Calu3 (cell line): ENCODE measurements at regions of chr18 and their contacts with region 1.

Region 1: GRCh38 chr18:37385846-37386778 is 179.5 kb downstream of the CELF4 start:
- DNase-seq: peak; percentile 18
- H3K4me3 Mint-ChIP-seq: no peak overlapping the region
- H3K27ac Mint-ChIP-seq: no peak overlapping the region
- H3K4me1 Mint-ChIP-seq: no peaks in the 10 kb centered on the region
- H3K27me3 Mint-ChIP-seq: peaks cover 86% of the 10 kb centered on the region
- CTCF ChIP-seq: peak; percentile 80

Region 2: GRCh38 chr18:36942264-36942663 is 443.8 kb before region 1 on chr18:
- CTCF ChIA-PET with region 1: no interaction called
- intact Hi-C with region 1: loop called (anchors 2 kb)
- DNase-seq: peak; percentile 40
- H3K4me3 Mint-ChIP-seq: no peak overlapping the region
- H3K27ac Mint-ChIP-seq: no peak overlapping the region
- H3K4me1 Mint-ChIP-seq: peaks cover 10% of the 10 kb centered on the region
- H3K27me3 Mint-ChIP-seq: no peaks in the 10 kb centered on the region
- CTCF ChIP-seq: peak; percentile 73

Region 3: DNA sequence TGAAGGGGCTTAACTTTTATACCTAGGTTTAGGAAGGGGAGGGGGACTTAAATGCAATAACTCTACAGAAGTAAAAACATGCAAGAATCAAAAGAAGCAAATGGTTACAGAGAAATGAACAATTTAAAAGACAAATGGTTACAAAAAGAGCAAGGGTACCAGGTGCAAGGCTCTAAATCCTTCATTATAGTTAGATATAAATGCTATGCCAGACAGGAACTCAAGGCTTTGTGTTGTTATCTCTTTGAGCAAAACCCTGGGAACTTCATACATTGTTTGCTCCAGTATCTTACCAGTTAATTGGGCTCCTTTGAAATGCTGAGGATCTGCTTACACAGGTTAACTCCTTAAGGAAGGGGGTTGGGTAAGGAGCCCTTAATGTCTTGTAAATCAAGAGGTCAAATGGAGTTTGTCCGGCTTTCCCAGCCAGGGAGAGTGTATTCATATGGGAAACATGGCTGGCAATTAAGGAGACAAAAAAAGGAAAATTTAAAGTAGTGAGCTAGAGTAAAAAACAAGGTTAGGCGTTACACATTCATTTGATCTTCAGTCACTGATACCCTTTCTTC is 168.0 kb before region 1 on chr18:
- CTCF ChIA-PET with region 1: no interaction called
- intact Hi-C with region 1: no loop called
- DNase-seq: no peak
- H3K4me3 Mint-ChIP-seq: no peak overlapping the region
- H3K27ac Mint-ChIP-seq: no peak overlapping the region
- H3K4me1 Mint-ChIP-seq: no peaks in the 10 kb centered on the region
- H3K27me3 Mint-ChIP-seq: no peaks in the 10 kb centered on the region
- CTCF ChIP-seq: no peak

Region 4: DNA sequence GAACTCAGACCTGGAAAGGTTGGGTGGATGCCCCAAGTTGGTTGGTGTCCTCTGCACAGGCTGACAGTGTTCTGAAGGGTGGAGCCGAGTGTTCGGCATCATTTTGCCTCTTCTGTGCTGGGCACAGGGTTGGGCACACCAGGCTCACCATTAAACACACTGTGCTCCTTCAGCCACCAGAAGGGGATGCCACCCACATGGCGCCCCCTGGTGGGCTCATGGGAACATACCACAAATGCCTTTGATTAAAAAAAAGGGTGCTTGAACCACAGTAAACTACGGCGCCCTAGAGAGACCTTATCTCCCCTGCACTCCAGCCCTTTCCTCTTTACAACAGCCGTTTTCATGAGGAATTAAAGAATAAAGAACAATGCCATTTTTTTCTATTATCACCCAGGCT is 90.1 kb after region 1 on chr18:
- CTCF ChIA-PET with region 1: no interaction called
- intact Hi-C with region 1: loop called (anchors 1 kb)
- DNase-seq: peak; percentile 52
- H3K4me3 Mint-ChIP-seq: no peak overlapping the region
- H3K27ac Mint-ChIP-seq: no peak overlapping the region
- H3K4me1 Mint-ChIP-seq: no peaks in the 10 kb centered on the region
- H3K27me3 Mint-ChIP-seq: peaks cover 100% of the 10 kb centered on the region
- CTCF ChIP-seq: peak; percentile 57

Region 5: GRCh38 chr18:37537868-37538525 is 151.9 kb after region 1 on chr18:
- CTCF ChIA-PET with region 1: interaction called, 3 read pairs
- intact Hi-C with region 1: loop called (anchors 2 kb)
- DNase-seq: peak; percentile 86
- H3K4me3 Mint-ChIP-seq: no peak overlapping the region
- H3K27ac Mint-ChIP-seq: no peak overlapping the region
- H3K4me1 Mint-ChIP-seq: no peaks in the 10 kb centered on the region
- H3K27me3 Mint-ChIP-seq: peaks cover 100% of the 10 kb centered on the region
- CTCF ChIP-seq: peak; percentile 86